BJ (cell line): ENCODE measurements at regions of chr2 and their contacts with region 1.

Region 1: GRCh38 chr2:110105608-110106467 is 9.8 kb downstream of the MALL start:
- DNase-seq: peak; percentile 33
- H3K4me3 ChIP-seq: no peak overlapping the region
- H3K27me3 ChIP-seq: no peaks in the 10 kb centered on the region
- CTCF ChIP-seq: no peak

Region 2: DNA sequence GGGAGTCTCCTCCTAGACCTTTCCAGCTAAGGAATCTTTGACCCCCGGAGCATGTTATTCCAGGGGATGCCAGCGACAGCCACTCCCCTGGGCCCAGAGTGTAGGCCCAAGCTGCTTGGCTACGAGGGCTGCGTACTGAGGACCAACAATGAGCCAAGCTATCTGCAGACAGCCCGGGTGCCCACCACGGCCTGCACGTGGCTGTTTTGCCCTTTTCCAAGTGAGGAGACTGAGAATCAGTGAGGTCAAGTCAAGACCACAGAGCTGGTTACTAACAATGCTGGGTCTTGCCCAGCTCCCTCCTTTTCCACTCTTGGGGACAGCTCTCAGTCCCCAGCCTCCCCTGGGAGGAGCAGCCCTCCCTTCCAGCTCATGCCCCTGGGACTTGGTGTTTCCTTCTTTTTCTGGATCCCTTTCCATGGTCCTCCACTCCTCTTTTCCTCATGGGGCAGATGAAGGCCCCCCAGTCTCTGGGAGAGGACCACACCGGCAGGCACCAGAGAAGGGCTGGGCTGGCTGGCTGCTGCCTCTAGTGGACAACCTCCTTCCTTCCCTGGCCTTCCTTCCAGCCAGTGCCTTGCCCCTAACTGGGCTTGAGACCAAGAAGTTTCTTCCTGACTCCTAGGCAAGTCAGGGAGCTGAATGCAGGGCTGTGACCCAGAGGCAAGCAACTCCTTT is 10.3 kb after region 1 on chr2:
- CTCF ChIA-PET with region 1: interaction called, 25 read pairs
- POLR2A ChIA-PET with region 1: no interaction called
- DNase-seq: no peak
- H3K4me3 ChIP-seq: peak overlapping the region; percentile 57
- H3K27me3 ChIP-seq: no peaks in the 10 kb centered on the region
- CTCF ChIP-seq: peak; percentile 81

Region 3: GRCh38 chr2:110131166-110131565 is 25.3 kb after region 1 on chr2:
- CTCF ChIA-PET with region 1: no interaction called
- POLR2A ChIA-PET with region 1: no interaction called
- DNase-seq: no peak
- H3K4me3 ChIP-seq: no peak overlapping the region
- H3K27me3 ChIP-seq: no peaks in the 10 kb centered on the region
- CTCF ChIP-seq: no peak